Sigmoid colon (tissue), 7 donors: ENCODE measurements at regions of chr4 and their contacts with region 1.

Region 1: DNA sequence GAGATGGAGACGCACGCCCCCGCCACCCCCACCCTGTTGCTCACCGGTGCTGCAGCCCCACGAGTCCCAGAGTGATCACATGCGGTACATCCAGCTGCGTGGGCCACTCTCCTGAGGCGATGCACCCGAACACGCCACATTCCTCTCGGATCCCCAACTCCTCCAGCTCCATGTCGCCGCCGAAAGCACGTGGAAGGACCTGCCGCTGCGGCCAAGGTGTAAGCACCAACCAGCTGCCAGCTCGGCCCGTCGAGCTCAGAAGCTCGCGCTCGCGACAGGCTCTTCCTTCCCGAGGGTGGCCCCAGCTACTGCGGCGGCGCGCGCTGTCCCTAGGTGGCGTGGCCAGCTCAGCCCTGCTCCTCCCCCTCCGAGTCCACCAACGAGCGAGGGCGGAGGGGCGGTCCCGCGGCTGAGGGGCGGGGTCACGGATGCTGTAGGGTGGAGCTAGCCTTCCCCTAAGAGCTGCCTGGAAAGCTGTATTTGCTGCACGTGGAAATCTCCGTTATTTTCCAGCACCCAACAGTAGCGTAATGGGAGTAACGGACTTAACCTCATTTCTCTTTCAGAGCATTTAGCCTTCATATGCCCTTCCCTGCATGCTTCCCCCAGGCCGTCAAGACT is at the start of gene PPAT:
- DNase-seq: peak; percentile 99
- H3K4me3 ChIP-seq: peak within 1 kb of the TSS; percentile 50 to 77 (median 70)
- H3K27ac ChIP-seq: peak within 1 kb of the TSS; percentile 97 to 98 (median 98)
- H3K4me1 ChIP-seq: peaks cover 0 to 33% (median 26%) of the 10 kb centered on the region in 4 donors
- H3K27me3 ChIP-seq: no peaks in the 10 kb centered on the region
- CTCF ChIP-seq: peak in 2 of 4 experiments; percentile 31 to 35
- EP300 ChIP-seq: no peak
- POLR2A ChIP-seq: peak; percentile 28 to 30
- total RNA-seq, gene PPAT: 4.2 to 6.3 (median 5.1) TPM

Region 2: DNA sequence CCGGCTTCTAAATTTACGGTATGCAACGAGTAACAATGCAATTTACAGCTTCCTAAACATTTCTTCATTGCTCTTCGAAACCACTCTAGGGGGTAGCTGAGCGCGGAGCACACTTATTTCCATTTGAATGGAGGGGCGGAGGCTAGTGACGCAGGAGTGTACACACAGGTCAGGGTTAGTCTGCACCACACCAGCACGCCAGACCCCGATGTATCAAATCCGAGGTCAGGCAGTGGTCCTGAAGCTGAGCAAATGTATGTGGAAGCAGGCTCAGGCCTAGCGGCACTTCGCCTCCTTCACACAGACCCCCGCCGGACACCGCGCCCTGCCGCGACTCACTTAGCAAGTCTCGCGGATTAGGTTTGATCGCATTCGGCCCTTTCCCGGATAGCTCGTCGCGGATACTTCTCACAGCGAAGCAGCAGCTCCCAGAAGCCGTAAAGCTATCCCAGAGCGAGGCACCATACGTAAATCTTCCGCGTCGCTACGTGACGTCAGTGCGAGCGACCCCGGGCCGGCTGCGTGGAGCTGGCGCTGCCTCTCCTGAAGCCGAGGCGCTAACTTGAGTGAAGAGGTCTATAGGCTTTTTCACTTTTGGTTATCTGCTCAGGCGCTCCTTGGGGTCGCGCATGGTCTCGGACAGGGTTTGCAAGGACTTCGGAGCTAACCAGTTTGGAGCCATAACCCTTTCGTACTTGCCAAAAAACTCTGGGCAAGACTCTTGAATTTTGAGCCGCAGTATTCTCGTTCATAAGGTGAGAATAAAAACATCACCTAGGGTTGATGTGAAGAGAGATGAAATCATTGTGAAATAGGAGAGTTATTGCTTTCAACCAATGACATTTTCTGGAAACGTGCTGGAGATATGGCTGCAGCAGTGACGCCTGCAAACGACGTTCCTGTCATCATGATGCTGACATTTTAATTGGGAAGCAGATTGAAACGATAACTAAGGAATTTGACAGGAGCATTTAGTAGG is 48.1 kb before region 1 on chr4 and contains the start of gene AASDH:
- intact Hi-C with region 1: loop called (anchors 5 kb)
- DNase-seq: peak; percentile 95
- H3K4me3 ChIP-seq: peak within 1 kb of the TSS; percentile 62 to 77 (median 74)
- H3K27ac ChIP-seq: peak within 1 kb of the TSS; percentile 82 to 95 (median 90)
- H3K4me1 ChIP-seq: peaks cover 0 to 20% (median 14%) of the 10 kb centered on the region in 4 donors
- H3K27me3 ChIP-seq: no peaks in the 10 kb centered on the region
- CTCF ChIP-seq: no peak
- EP300 ChIP-seq: peak in 1 of 4 donors; percentile 69
- POLR2A ChIP-seq: peak; percentile 62 to 84
- total RNA-seq, gene AASDH: 5.5 to 13.4 (median 9.3) TPM

Region 3: DNA sequence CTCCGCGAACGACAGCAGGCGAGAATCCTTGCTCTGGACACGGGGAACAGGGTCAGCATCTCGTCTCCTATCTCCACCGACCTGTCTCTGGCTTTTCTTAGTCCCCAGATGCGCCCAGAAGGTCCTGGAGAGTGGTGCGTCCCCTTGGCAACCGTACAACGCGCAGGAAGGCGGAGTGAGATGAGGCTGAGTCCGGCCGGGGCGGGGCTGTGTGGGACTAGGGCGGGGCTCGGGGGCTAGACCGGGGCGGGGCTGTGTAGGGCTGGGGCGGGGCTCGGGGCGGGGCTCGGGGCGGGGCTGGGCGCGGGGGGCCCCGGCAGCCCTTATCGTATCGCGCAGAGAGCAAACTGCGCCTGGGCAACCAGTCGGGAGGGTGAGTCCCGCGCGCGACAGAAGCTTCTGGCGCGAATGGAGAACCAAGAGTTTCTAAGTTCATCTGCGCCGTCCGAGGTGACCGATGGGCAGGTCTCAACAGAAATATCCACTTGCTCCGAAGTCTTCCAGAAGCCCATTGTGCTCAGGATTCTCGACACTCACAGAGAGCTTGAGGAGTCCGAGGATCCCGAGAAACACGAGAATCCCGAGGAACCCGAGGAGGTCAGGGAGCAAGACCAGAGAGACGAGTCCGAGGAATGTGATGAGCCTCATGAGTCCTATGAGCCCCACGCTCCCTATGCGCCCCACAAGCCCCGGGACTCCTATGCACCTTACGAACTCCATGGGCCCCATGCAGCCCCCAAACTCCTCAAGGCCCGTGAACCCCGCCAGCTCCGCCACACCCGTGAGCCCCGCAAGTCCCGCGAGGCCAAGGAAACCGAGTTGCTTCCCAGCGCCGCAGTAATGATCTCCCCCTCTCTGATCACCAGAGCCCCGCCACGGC is 95.1 kb after region 1 on chr4:
- intact Hi-C with region 1: loop called (anchors 5 kb)
- DNase-seq: peak; percentile 96
- H3K4me3 ChIP-seq: peak overlapping the region; percentile 49 to 59 (median 54)
- H3K27ac ChIP-seq: peak overlapping the region in 3 of 4 donors; percentile 71 to 78 (median 74)
- H3K4me1 ChIP-seq: peaks cover 0 to 24% (median 17%) of the 10 kb centered on the region in 4 donors
- H3K27me3 ChIP-seq: no peaks in the 10 kb centered on the region
- CTCF ChIP-seq: no peak
- EP300 ChIP-seq: no peak
- POLR2A ChIP-seq: peak; percentile 32 to 35